ENCODE measurements at regions of chr3 and their contacts with region 1.

Region 1: DNA sequence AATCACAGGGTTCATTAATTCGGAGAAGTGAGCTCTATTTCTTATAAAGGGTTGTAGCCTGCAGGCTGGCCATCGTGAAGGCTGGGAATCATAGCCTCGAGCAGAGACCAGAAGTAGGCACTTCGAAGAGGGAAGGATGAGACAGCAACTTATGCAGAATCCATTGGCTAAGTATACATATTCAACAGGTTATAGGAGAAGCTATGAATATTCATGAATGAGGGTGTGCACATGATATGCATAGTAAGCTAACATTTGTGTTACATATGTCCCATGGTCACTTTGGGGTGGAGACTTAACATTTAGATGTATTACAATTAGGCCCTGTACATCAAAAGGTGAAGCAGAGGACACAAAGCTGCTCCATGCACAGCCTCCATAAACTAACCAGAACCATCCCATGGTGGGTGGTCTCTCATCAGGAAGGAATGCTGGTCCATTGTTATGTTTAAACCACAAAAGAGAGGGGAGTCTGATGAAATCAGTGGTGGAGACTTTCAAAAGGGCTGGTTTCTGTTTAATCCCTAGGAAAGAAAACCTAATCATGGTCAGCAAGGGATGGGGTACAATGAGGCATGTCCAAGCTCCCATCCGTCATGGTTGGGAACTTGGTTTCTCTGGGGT is 80.8 kb upstream of the FHIT start:
- DNase-seq: no peak
- H3K4me3 ChIP-seq: no peak overlapping the region
- CTCF ChIP-seq: no peak
- POLR2A ChIP-seq: no peak

Region 2: DNA sequence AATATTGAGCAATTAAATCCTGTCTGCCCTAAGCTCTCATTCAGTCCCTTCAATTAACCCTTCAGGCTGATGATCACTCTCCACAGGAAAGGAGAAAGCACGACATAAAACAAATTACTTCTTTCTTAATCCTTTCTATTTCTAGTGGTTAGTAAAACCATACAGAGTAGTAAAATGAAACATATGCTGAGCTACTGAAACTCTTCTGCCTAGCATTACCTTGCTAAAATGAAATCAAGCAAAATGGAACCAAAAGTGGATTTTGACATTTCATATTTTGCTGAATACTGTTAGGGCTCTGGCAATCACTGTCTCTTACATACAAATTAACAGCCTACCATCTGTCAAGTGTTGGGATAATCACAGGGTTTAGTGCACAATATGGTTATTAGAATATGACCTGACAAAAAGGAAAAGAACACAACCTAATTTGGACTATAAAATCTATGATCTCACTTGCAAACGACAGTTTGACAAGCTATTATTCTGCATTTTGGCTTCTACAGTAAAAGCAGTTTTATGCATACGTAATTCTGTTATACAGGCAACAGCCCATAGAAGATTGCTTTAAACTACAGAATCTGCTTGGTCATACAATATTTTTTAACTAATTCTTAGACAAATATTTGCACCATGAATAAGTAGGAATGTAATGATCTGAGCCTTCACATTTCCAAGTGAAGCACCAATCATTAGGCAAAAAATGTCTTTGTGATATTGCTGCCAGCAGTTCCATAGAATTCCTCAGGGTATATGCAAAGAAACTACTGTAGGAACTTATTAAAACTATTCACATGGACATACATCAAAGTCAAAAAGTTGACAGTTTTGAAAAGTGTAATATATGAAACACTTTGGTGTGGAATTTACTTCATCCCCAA is 185.8 kb before region 1 on chr3:
- intact Hi-C with region 1: no loop called
- DNase-seq: no peak
- H3K4me3 ChIP-seq: no peak overlapping the region
- CTCF ChIP-seq: no peak
- POLR2A ChIP-seq: no peak

Region 3: DNA sequence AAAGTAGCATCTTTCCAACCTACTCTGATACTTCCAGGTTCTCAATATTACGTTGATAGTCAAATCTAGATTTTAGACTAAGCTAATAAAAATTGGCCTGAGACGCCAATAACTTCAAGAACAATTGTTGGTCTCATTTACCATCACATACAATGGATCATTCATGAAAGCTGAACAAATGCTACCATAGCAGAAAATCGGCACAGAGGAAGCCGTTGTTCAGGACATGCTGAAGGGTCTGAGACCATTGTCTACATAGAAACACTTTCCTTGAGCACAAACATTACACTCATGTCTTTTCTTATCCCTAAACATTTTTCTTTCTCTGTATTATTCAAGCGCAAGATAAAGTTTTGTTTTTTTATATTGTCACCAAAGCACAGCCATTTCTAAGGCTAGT is 43.6 kb before region 1 on chr3:
- intact Hi-C with region 1: loop called (anchors 1 kb)
- DNase-seq: no peak
- H3K4me3 ChIP-seq: no peak overlapping the region
- CTCF ChIP-seq: no peak
- POLR2A ChIP-seq: no peak

Region 4: DNA sequence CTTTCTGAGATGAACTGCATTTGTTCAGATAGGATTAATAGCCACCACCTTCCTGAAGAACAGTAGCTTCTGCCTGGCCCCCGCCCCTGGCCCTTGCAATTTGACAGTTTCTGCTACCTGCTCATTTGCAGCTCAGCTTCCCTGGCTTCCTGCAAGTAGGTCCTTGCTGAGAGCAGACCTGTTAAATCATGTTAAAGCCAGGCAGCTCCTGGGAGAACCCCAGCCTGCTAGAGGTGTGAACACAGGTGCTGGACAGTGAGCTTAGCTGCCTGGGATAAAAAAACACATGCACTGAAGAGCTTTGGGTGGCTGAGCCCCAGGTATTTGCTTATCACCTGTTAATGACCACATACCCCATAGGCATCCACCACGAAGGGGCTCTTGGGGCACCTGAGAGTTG is 372.8 kb after region 1 on chr3:
- intact Hi-C with region 1: no loop called
- DNase-seq: no peak
- H3K4me3 ChIP-seq: no peak overlapping the region
- CTCF ChIP-seq: no peak
- POLR2A ChIP-seq: no peak

Measured in lower leg skin (tissue), 4 donors.